Colonic mucosa (tissue), 4 donors: ENCODE measurements at regions of chr16 and their contacts with region 1.

Region 1: DNA sequence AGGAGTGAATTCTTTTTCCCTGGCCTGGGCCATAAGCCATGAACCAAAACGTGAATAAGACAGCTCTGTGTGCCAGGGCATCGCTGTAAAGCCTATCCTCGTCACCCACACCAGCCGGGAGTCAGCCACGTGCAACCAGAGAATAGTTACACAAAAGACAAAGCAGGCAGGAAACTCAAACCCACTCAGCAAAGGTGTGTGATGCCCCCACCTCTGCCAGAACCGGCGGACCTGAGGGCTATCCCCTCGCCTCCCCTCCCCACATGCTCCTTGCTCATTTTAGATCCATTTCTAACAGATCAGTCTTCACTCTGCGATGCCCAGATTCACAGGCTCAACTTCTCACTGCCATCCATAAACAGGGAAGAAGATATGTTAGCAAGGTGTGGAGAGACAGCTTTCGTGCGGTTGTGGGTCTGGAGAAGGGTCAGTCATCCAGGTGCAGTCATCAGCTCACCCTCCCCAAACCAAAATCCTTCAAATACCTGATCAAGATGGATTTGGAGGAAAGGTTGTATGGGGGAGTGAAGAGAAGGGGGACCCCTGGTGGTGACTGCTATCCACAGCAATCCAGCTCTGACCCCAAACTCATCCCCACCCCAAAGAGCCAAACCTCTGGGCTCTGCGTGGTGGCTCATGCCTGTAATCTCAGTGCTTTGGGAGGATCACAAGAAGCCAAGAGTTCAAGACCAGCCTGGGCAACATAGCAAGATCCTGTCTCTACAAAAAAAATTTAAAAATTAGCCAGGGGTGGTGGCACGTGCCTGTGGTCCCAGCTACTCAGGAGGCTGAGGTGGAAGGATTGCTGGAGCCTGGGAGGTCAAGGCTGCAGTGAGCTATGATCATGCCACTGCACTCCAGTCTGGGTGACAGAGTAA is 219.2 kb downstream of the C16orf78 start:
- DNase-seq: no peak
- H3K4me3 ChIP-seq: no peak overlapping the region
- H3K27ac ChIP-seq: no peak overlapping the region
- H3K4me1 ChIP-seq: no peaks in the 10 kb centered on the region
- H3K27me3 ChIP-seq: no peaks in the 10 kb centered on the region
- CTCF ChIP-seq: peak; percentile 52

Region 2: GRCh38 chr16:49407873-49408550 is 184.8 kb before region 1 on chr16:
- intact Hi-C with region 1: loop called (anchors 5 kb)
- DNase-seq: peak; percentile 88
- H3K4me3 ChIP-seq: no peak overlapping the region
- H3K27ac ChIP-seq: no peak overlapping the region
- H3K4me1 ChIP-seq: no peaks in the 10 kb centered on the region
- H3K27me3 ChIP-seq: no peaks in the 10 kb centered on the region
- CTCF ChIP-seq: peak; percentile 78

Region 3: GRCh38 chr16:49491771-49492761 is 100.7 kb before region 1 on chr16:
- intact Hi-C with region 1: loop called (anchors 5 kb)
- DNase-seq: no peak
- H3K4me3 ChIP-seq: peak overlapping the region; percentile 17
- H3K27ac ChIP-seq: no peak overlapping the region
- H3K4me1 ChIP-seq: no peaks in the 10 kb centered on the region
- H3K27me3 ChIP-seq: no peaks in the 10 kb centered on the region
- CTCF ChIP-seq: peak; percentile 93

Region 4: DNA sequence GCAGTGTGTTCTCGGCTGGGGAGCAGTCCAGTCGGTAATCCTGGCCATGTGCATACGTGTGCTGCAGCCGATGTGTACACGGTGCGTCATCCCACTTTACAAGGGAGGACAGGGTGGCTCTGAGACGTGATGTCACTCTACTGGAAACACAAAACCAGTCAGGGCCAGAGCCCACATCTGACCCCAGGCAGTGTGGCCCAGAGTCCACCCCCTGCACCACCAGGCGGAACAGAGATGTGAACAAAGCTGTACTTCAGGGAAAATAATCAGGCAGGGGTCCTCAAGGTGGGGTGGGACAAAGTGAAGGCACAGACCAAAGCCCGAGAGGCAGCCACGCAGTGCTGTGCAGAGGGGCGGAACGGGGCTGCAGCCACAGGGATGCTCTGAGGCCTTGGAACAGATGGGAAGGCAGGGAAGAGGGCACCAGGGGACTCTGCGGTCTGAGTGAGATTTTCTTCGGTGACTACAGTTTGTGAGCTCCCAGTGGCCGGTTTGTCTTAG is 81.6 kb after region 1 on chr16:
- intact Hi-C with region 1: no loop called
- DNase-seq: no peak
- H3K4me3 ChIP-seq: no peak overlapping the region
- H3K27ac ChIP-seq: no peak overlapping the region
- H3K4me1 ChIP-seq: no peaks in the 10 kb centered on the region
- H3K27me3 ChIP-seq: no peaks in the 10 kb centered on the region
- CTCF ChIP-seq: no peak